ENCODE measurements at regions of chr1 and their contacts with region 1.

Region 1: DNA sequence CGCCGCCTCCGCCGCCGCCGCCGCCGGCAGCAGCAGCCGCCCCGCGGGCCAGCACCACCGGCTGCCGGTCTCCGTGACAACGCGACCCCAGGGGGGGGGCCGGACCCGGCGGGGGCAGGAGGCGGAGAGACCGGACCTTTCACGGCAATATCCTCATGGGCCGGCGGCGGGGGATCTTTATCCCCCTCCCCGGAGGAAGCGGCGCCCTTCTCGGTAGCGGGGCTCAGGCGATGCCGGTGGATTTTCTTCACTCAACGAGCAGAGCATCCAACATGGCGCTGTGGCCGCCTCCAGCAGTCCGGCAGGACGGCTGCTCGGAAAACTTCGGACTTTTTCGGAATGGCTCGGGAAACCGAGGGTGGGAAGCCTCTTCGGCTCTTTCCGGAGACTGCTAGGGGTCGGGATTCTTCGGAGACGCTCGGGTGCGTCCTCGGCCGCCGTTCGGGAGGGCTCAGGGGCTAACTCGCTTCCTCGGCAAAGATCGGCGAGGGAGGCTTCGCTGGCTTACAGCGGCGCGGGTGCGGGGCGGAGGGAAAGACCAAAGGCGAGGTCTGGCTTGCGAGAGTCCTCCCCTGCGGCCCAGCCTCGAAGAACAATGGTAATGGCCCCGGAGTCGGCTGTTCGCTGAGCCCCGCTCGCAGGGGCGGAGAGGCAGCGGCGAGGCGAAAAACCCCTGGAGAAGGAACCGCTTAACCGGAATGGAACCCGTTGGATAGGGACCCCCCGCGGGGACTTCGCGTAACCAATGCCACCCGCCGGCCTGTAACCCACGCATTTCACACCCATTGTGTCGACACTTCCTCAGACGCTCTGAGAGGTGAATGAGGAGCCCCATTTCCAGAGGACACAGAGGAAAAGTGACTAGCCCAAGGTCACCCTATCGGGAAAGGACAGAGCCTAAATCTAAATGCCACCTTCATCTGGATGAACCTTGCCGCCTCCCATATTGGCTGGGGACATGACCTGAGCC is at the start of gene EIF4G3:
- DNase-seq: peak; percentile 93
- ATAC-seq: peak; percentile 98
- H3K4me3 ChIP-seq: peak within 1 kb of the TSS; percentile 89 to 94
- H3K27ac ChIP-seq: peak within 1 kb of the TSS; percentile 78
- H3K4me1 ChIP-seq: peaks cover 8 to 22% of the 10 kb centered on the region in 2 experiments; a peak in 3 of 4 replicates
- H3K27me3 ChIP-seq: no peaks in the 10 kb centered on the region
- CTCF ChIP-seq: no peak
- POLR2A ChIP-seq: peak; percentile 61
- RAD21 ChIP-seq: no peak
- total RNA-seq, gene EIF4G3: 40.1 TPM

Region 2: GRCh38 chr1:21022279-21023040 is 154.4 kb before region 1 on chr1:
- CTCF ChIA-PET with region 1: no interaction called
- POLR2A ChIA-PET with region 1: no interaction called
- RAD21 ChIA-PET with region 1: no interaction called
- intact Hi-C with region 1: loop called (anchors 5 kb)
- DNase-seq: peak; percentile 95
- ATAC-seq: peak; percentile 98
- H3K4me3 ChIP-seq: peak overlapping the region; percentile 3 to 42; a peak in 2 of 4 replicates
- H3K27ac ChIP-seq: peak overlapping the region; percentile 91
- H3K4me1 ChIP-seq: peaks cover 27 to 33% of the 10 kb centered on the region in 2 experiments
- H3K27me3 ChIP-seq: no peaks in the 10 kb centered on the region
- CTCF ChIP-seq: no peak
- POLR2A ChIP-seq: no peak
- RAD21 ChIP-seq: peak; percentile 11; the same call in 1 of the 2 replicates

Region 3: DNA sequence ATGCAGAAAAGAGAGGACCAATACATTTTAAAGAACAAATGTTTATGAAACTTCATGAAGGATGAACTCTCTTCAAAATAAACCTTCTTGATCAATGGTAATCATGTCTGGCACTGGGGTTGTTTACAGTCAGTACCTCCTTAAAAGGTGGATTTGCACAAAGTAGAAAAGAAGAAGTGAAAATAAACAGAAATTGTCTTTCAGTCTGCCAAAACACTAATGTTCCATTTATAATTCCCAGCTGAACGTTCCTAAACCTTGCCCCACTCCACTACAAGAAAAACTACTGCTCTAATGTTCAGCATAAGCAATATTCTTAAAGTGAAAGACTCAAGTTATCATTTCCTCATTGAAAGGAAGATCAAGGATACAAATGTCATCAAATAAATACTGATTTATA is 86.4 kb before region 1 on chr1:
- CTCF ChIA-PET with region 1: no interaction called
- POLR2A ChIA-PET with region 1: no interaction called
- RAD21 ChIA-PET with region 1: no interaction called
- intact Hi-C with region 1: no loop called
- DNase-seq: no peak
- ATAC-seq: no peak
- H3K4me3 ChIP-seq: peak overlapping the region in 1 of 2 experiments; percentile 1; a peak in 1 of 4 replicates
- H3K27ac ChIP-seq: no peak overlapping the region
- H3K4me1 ChIP-seq: peaks cover 10 to 16% of the 10 kb centered on the region in 2 experiments
- H3K27me3 ChIP-seq: no peaks in the 10 kb centered on the region
- CTCF ChIP-seq: no peak
- POLR2A ChIP-seq: no peak
- RAD21 ChIP-seq: no peak

Measured in HCT116 (cell line).